B cell (primary cell): ENCODE measurements at regions of chr10 and their contacts with region 1.

Region 1: DNA sequence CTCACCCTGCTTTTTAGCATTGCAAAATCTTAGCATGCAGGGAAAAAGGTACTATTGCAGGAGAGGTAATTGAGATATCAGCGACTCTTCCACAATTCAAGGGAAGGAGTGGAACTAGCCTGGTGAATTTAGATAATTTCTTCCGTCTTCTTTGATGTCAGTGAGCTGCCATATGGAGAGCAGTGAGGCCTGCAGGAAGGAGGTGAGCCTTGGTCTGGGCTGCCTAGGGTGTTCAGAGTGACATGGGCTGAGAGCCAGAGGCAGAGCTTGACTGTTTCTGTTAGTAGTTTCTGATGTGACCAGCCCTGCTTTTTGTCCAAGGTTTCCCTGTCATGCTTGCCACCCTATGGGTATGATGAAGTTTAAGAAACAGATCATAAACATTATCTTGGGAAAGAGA is 28.6 kb downstream of the KAT6B start:
- DNase-seq: peak; percentile 38
- ATAC-seq: peak; percentile 16
- H3K4me3 ChIP-seq: peak overlapping the region in 1 of 5 experiments; percentile 21
- H3K4me3 Mint-ChIP-seq: peak overlapping the region; percentile 68
- H3K27ac ChIP-seq: peak overlapping the region; percentile 72 to 88
- H3K27ac Mint-ChIP-seq: peak overlapping the region; percentile 82
- H3K4me1 ChIP-seq: peaks cover 28 to 31% of the 10 kb centered on the region in 2 donors
- H3K4me1 Mint-ChIP-seq: peaks cover 45% of the 10 kb centered on the region
- H3K27me3 ChIP-seq: no peaks in the 10 kb centered on the region
- H3K27me3 Mint-ChIP-seq: no peaks in the 10 kb centered on the region
- CTCF ChIP-seq: no peak

Region 2: DNA sequence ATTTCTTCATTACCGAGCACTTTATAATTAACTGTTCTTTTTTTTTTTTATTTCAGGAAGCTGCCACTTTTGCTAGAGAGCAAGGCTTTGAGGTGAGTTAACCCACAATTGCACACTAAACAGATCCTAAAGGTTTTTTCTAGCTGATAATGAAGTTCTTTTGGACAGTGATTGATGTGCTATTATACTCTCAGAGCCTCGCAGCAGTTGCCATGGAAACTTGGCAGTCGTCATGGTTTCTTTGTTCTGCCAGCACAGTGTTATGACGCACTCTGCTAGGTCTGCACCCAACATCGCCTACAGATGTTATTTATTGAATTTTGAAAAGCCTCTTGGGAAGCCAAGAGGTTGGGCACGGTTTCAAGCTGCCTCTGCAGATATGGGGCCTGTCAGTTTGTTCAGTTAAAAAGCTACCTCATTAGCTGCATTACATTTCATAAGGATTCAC is 265.8 kb before region 1 on chr10:
- CTCF ChIA-PET with region 1: no interaction called
- POLR2A ChIA-PET with region 1: no interaction called
- intact Hi-C with region 1: loop called (anchors 2 kb)
- DNase-seq: peak; percentile 77
- ATAC-seq: peak; percentile 73
- H3K4me3 ChIP-seq: no peak overlapping the region
- H3K4me3 Mint-ChIP-seq: peak overlapping the region; percentile 21
- H3K27ac ChIP-seq: peak overlapping the region in 1 of 2 donors; percentile 28
- H3K27ac Mint-ChIP-seq: peak overlapping the region; percentile 74
- H3K4me1 ChIP-seq: peaks cover 23 to 27% of the 10 kb centered on the region in 2 donors
- H3K4me1 Mint-ChIP-seq: peaks cover 49% of the 10 kb centered on the region
- H3K27me3 ChIP-seq: no peaks in the 10 kb centered on the region
- H3K27me3 Mint-ChIP-seq: no peaks in the 10 kb centered on the region
- CTCF ChIP-seq: no peak

Region 3: DNA sequence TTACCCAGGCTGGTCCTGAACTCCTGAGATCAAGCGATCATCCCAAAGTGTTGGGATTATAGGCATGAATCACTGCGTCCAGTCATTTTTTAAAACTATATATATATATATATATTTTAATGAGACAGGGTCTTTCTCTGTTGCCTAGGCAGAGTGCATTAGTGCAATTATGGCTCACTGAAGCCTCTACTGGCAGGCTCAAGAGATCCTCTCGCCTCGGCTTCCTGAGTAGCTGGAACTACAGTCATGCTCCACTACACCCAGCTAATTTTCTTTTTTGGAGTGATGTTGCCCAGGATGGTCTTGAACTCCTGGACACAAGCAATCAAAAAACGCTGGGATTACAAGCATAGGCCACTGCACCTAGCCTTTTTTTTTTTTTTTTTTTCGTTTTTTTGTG is 84.0 kb before region 1 on chr10:
- CTCF ChIA-PET with region 1: no interaction called
- POLR2A ChIA-PET with region 1: no interaction called
- intact Hi-C with region 1: no loop called
- DNase-seq: no peak
- ATAC-seq: no peak
- H3K4me3 ChIP-seq: no peak overlapping the region
- H3K4me3 Mint-ChIP-seq: no peak overlapping the region
- H3K27ac ChIP-seq: no peak overlapping the region
- H3K27ac Mint-ChIP-seq: no peak overlapping the region
- H3K4me1 ChIP-seq: no peaks in the 10 kb centered on the region
- H3K4me1 Mint-ChIP-seq: peaks cover 5% of the 10 kb centered on the region
- H3K27me3 ChIP-seq: no peaks in the 10 kb centered on the region
- H3K27me3 Mint-ChIP-seq: no peaks in the 10 kb centered on the region
- CTCF ChIP-seq: no peak

Region 4: DNA sequence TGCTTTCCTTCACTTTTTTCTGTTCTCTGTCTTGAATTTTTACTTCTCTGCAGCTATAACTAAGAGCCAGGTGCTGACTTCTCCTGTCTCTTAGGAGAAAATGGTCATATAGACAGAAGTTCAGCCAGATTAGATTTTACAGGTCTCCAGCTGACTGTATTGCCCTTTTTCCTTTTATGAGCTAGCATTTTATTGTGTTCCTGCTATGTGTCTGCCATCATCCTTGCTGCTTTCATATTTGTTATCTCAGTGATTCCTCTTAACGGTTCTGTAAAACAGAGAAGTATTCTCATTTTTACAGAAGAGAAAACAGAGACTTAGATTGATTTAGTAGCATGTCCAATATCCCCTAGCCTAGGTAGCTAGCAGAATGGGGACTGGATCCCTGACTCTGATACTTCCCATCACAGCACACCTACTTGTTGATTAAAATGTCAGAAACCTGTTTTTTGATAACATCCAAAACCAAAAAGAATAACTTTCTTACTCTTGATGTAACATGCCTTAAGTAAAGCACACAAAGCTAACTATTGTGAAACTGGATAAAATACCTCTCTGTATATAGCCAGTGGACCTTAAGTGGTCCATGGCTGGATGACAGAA is 23.4 kb before region 1 on chr10:
- CTCF ChIA-PET with region 1: interaction called, 4 read pairs
- POLR2A ChIA-PET with region 1: interaction called, 15 read pairs
- intact Hi-C with region 1: loop called (anchors 1 kb)
- DNase-seq: no peak
- ATAC-seq: no peak
- H3K4me3 ChIP-seq: no peak overlapping the region
- H3K4me3 Mint-ChIP-seq: no peak overlapping the region
- H3K27ac ChIP-seq: peak overlapping the region in 1 of 2 donors; percentile 1
- H3K27ac Mint-ChIP-seq: peak overlapping the region; percentile 38
- H3K4me1 ChIP-seq: peaks cover 47 to 52% of the 10 kb centered on the region in 2 donors
- H3K4me1 Mint-ChIP-seq: peaks cover 68% of the 10 kb centered on the region
- H3K27me3 ChIP-seq: no peaks in the 10 kb centered on the region
- H3K27me3 Mint-ChIP-seq: no peaks in the 10 kb centered on the region
- CTCF ChIP-seq: no peak

Region 5: DNA sequence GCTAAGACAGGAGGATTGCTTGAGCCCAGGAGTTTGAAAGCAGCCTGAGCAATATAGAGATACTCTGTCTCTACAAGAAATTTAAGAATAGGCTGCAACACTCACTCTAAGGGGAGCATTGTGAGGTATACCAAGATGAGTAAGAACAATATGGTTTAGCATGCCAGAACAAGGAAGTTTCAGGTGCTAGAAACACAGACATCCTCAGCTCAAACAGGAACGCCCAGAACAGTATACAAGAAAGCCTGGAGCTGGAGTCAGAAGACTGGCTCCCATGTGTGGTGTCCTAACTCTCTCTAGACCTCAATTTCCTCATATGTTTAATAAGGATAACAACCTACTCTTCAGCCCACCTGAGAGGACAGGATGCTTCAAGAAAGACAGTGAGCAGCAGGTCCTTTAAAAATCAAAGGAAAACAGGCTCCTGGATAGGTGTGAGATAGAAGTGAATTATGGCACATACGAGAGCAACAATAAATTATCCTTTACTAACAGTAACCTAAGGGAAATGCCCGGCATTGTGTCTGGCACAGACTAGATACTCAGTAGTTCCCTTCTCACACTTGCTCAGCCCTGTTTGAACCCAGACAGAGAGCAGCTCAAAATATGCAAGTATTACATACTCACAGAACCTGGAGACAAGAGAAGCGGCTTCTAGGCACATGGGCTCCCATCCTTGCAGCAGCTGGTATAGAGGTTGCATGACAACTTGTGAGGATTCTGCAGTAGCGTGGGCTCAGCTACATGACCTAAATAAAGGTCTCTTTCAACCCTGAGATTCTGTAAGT is 16.8 kb after region 1 on chr10:
- CTCF ChIA-PET with region 1: interaction called, 5 read pairs
- POLR2A ChIA-PET with region 1: interaction called, 3 read pairs
- intact Hi-C with region 1: loop called (anchors 2 kb)
- DNase-seq: no peak
- ATAC-seq: peak; percentile 41
- H3K4me3 ChIP-seq: no peak overlapping the region
- H3K4me3 Mint-ChIP-seq: no peak overlapping the region
- H3K27ac ChIP-seq: no peak overlapping the region
- H3K27ac Mint-ChIP-seq: peak overlapping the region; percentile 21
- H3K4me1 ChIP-seq: peaks cover 16 to 19% of the 10 kb centered on the region in 2 donors
- H3K4me1 Mint-ChIP-seq: peaks cover 51% of the 10 kb centered on the region
- H3K27me3 ChIP-seq: no peaks in the 10 kb centered on the region
- H3K27me3 Mint-ChIP-seq: no peaks in the 10 kb centered on the region
- CTCF ChIP-seq: no peak

Region 6: DNA sequence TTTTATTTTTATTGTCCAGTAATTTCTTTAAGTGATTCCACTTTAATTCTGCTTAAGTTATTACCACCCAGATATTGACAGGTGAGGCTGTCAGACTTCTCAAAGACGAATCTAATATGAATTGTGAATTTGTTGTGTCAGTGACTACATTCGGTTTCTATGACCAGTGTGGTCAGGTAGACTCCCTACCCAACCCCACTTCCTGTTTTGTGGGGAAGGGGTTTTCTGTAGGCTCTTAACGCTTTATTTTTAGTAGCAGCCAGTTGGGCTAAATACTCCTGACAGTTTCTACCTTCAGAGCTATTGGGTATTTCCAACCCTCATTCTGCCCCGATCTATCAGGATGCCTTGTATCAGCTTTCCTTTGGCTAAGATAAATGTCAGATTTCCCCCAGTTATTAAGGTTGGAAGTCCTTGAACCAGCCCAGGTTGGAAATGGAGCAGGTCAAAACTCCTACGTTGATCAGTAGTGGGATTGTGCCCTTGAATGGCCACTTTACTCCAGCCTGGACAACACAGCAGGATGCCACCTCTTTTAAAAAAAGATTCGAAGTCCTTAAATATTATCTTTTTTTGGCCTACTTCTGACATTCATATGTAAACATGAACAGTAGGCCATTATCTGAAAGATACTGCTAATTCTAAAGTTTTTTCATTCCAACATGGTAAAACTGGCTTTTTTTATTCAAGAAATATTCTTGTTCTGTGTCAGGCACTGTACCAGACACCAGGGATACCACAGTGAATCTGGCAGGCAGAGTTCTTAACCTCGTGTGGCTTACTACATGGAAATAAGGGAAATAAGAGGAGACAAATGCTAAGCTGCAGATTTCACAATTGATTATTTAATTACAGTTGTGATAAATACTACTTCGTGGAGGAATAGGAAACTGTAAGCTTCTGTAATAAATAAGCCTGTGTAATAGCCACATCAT is 123.2 kb after region 1 on chr10:
- CTCF ChIA-PET with region 1: no interaction called
- POLR2A ChIA-PET with region 1: no interaction called
- intact Hi-C with region 1: loop called (anchors 10 kb)
- DNase-seq: peak; percentile 84
- ATAC-seq: peak; percentile 85
- H3K4me3 ChIP-seq: peak overlapping the region in 3 of 5 experiments; percentile 8 to 40 (median 11)
- H3K4me3 Mint-ChIP-seq: peak overlapping the region; percentile 78
- H3K27ac ChIP-seq: peak overlapping the region; percentile 37 to 66
- H3K27ac Mint-ChIP-seq: peak overlapping the region; percentile 81
- H3K4me1 ChIP-seq: peaks cover 35 to 39% of the 10 kb centered on the region in 2 donors
- H3K4me1 Mint-ChIP-seq: peaks cover 51% of the 10 kb centered on the region
- H3K27me3 ChIP-seq: no peaks in the 10 kb centered on the region
- H3K27me3 Mint-ChIP-seq: no peaks in the 10 kb centered on the region
- CTCF ChIP-seq: no peak